HEK293 (cell line): ENCODE measurements at regions of chr15 and their contacts with region 1.

Region 1: DNA sequence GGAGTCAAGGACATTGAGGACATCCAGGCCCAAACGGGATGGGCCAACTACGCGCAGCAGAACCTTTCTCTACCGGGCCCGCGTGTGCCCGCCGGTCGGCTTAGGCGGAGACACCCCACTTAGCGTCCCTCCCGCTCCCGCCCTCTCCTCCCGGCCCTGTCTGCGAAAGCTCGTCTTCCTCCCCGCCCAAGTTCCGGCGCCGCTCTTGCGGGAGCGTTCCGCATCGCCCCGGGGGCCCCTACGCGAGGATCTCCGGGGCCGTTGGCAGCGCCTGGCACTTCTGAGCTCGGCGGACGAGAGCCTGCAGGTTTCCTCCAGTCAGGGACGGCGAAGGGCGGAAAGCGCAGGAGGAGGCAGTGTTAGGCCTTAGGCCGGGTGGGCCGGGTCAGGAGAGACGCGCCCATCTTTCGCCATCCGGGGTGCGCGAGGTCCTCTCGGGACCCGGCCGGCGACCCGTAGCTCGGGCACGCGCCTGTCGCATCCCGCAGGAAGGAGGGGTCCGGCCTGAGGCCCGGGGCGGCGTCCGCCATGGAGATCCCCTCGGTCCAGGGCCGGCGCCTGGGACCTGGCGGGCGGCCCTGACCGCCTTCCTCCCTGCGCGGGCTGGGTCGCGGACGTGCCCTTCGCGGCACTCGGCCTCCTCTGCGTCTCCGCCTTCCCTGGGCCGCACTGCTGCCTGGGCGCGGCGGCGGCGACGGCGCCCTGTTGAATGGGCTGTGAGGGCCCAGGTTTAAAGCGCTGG is at the start of gene FEM1B:
- H3K4me3 ChIP-seq: peak within 1 kb of the TSS; percentile 95
- H3K27ac ChIP-seq: peak within 1 kb of the TSS; percentile 97
- H3K4me1 ChIP-seq: peaks cover 13% of the 10 kb centered on the region; the same call in 1 of the 2 replicates
- CTCF ChIP-seq: no peak

Region 2: GRCh38 chr15:68295014-68295805 is 17.4 kb after region 1 on chr15:
- CTCF ChIA-PET with region 1: interaction called, 8 read pairs
- POLR2A ChIA-PET with region 1: interaction called, 14 read pairs
- H3K4me3 ChIP-seq: no peak overlapping the region
- H3K27ac ChIP-seq: no peak overlapping the region
- H3K4me1 ChIP-seq: peaks cover 6% of the 10 kb centered on the region; the same call in 1 of the 2 replicates
- CTCF ChIP-seq: no peak

Region 3: DNA sequence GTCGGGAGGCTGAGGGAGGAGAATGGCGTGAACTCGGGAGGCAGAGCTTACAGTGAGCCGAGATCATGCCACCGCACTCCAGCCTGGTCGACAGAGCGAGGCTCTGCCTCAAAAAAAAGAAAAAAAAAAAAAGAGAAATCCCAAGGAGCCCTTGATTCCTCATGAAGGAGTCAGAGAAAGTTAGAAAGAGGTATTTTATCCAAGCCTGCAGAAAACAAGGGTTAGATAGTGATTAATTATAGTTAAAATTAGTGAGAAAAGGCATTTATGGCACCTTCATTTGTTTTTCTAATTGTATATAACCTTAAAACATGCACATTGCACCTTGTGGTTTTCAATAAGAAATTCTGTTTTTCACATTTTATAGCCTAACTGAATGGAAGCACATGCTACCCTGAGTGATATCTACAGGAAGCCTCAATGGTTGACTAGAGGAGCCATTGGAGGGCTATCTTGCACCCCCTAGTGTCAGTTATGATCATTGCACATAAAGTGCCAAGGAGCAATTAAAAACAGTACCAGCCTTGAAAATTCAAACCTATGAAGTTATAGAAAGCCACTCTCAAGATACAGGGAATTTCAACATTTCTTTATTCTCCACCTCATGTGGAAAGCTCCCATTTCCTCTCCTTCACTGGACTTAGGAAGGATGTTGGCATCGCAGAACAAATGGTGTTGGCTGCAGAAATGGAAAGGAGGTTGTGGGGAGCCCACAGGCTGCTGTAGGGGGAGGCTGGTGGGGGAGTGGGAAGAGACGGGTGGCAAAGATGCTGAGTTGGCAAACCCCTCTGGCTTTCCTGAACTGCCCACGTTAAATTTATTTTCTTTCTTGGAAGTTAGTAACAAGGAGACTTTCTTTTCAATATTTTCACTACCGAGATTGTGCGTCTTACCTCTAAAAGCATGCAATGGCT is 105.6 kb after region 1 on chr15:
- CTCF ChIA-PET with region 1: no interaction called
- POLR2A ChIA-PET with region 1: no interaction called
- H3K4me3 ChIP-seq: no peak overlapping the region
- H3K27ac ChIP-seq: no peak overlapping the region
- H3K4me1 ChIP-seq: no peaks in the 10 kb centered on the region
- CTCF ChIP-seq: peak; percentile 46; the same call in 1 of the 2 replicates